ENCODE measurements at regions of chr12 and their contacts with region 1.

Region 1: DNA sequence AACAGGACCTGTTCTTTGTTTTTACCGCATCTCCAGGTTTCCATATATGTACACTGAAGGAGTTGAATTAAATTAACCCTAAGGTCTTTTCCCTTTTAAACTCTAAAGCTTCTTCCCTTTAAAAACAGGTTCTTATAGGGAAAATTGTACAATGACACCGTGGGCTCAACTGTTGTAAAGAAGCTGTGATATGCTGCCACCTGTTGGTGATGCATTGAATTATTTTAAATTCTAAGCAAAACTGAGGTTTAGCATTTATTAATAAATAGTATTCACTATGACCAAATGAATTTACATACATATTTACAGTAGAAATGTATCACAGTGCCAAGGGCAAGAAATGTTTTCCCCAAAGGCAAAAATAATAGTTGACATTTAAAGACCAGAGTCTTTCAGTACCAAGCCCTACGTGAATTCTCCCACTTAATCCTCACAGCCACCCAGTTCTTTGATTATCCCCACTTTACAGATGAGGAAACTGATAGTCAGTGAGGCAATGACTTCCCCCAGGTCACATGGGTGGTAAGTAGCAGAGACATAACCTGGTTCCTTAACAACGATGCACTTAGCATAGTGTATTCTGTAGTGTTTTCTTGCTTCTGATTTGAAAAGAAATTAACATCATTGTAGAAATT is 35.7 kb upstream of the TMEM263 start:
- DNase-seq: no peak
- ATAC-seq: peak; percentile 55
- H3K4me3 ChIP-seq: no peak overlapping the region
- H3K27ac ChIP-seq: no peak overlapping the region
- H3K4me1 ChIP-seq: peaks cover 6% of the 10 kb centered on the region
- H3K27me3 ChIP-seq: no peaks in the 10 kb centered on the region; a peak in 1 of 4 replicates
- CTCF ChIP-seq: peak; percentile 55 to 73 (median 64)
- EP300 ChIP-seq: no peak
- POLR2A ChIP-seq: no peak
- RAD21 ChIP-seq: peak; percentile 87

Region 2: DNA sequence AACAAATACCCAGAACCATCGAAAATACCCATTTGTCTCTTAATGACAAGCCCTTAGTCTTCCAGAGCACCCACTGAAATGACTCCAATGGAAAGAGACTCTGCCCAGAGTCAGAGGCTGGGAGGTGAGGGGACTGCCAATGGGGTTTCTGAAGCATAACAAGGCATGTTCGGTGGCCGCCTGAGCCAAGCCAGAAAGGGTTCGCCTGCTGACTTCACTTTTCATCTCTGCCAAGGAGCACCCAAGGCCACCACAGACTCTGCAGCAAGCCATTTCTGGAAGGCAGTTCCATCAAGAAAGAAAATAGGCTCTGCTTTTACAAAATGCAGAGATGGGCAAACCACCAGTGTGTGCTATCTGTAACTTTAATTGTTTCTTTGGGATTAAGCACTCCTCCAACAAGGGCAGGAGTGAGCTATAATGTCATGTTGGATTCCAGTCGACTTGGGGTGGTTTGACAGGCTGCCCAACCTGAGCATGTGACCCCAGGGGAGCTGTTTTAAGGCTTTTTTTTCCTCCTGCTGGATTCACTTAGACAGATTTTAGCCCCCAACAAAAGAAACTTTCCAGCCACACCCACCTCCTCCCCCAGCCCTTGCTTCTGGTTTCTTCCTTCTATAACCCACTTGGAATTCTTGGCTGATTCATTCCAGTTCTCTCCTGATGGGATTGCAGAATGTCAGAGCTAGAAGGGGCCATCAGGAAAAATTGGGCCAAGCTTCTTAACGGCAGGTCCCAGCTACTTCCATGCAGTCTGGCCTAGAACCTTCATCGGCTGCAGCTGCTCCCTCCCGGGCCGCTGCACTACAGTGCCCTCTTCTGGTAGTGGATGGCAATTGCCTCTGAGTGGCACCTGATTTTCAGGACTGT is 696.3 kb before region 1 on chr12:
- CTCF ChIA-PET with region 1: interaction called, 3 read pairs
- POLR2A ChIA-PET with region 1: no interaction called
- RAD21 ChIA-PET with region 1: interaction called, 7 read pairs
- SMC1A ChIA-PET with region 1: interaction called, 3 read pairs
- in situ Hi-C with region 1: no loop called
- intact Hi-C with region 1: loop called (anchors 10 kb)
- DNase-seq: no peak
- ATAC-seq: peak; percentile 94
- H3K4me3 ChIP-seq: no peak overlapping the region
- H3K27ac ChIP-seq: no peak overlapping the region
- H3K4me1 ChIP-seq: no peaks in the 10 kb centered on the region
- H3K27me3 ChIP-seq: no peaks in the 10 kb centered on the region
- CTCF ChIP-seq: peak; percentile 84 to 98 (median 95)
- EP300 ChIP-seq: no peak
- POLR2A ChIP-seq: no peak
- RAD21 ChIP-seq: peak; percentile 59

Region 3: GRCh38 chr12:106378788-106379187 is 541.2 kb before region 1 on chr12:
- CTCF ChIA-PET with region 1: interaction called, 23 read pairs
- POLR2A ChIA-PET with region 1: no interaction called
- RAD21 ChIA-PET with region 1: interaction called, 3 read pairs
- SMC1A ChIA-PET with region 1: interaction called, 3 read pairs
- in situ Hi-C with region 1: no loop called
- intact Hi-C with region 1: no loop called
- DNase-seq: no peak
- ATAC-seq: no peak
- H3K4me3 ChIP-seq: no peak overlapping the region
- H3K27ac ChIP-seq: no peak overlapping the region
- H3K4me1 ChIP-seq: no peaks in the 10 kb centered on the region
- H3K27me3 ChIP-seq: no peaks in the 10 kb centered on the region
- CTCF ChIP-seq: no peak
- EP300 ChIP-seq: no peak
- POLR2A ChIP-seq: no peak
- RAD21 ChIP-seq: no peak

Region 4: DNA sequence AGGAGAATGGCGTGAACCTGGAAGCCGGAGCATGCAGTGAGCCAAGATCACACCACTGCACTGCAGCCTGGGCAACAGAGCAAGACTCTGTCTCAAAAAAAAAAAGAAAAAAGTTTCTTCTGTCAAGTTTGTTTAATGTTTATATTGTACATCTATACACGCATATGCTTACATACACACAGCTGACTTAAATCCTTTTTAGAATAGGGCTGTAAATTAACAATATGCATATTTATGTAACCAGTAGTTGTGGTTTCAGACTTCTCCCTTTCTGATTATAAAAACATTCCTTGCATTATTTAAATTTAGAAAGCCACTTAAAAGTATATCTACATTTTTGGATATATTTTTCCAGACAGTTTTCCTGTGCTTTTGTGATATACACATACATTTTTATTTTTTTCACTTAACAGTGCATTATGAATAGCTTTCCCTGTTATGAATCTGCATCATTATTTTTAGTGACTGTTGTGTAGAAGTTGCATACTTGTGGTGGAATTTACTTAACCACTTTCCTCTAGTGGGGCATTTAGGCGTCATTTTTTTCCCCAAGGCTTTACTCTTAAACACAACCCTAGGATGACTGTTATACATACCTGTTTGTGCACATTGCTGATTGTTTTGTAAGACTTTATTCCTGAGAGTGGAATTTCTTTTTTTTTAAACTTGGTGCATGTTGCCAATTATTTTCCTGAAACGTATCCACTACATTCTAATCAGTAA is 533.1 kb before region 1 on chr12:
- CTCF ChIA-PET with region 1: interaction called, 69 read pairs
- POLR2A ChIA-PET with region 1: no interaction called
- RAD21 ChIA-PET with region 1: interaction called, 12 read pairs
- SMC1A ChIA-PET with region 1: interaction called, 26 read pairs
- in situ Hi-C with region 1: loop called (anchors 5 kb)
- intact Hi-C with region 1: loop called (anchors 1 kb)
- DNase-seq: no peak
- ATAC-seq: no peak
- H3K4me3 ChIP-seq: no peak overlapping the region
- H3K27ac ChIP-seq: no peak overlapping the region
- H3K4me1 ChIP-seq: no peaks in the 10 kb centered on the region
- H3K27me3 ChIP-seq: no peaks in the 10 kb centered on the region
- CTCF ChIP-seq: no peak
- EP300 ChIP-seq: no peak
- POLR2A ChIP-seq: no peak
- RAD21 ChIP-seq: no peak

Region 5: DNA sequence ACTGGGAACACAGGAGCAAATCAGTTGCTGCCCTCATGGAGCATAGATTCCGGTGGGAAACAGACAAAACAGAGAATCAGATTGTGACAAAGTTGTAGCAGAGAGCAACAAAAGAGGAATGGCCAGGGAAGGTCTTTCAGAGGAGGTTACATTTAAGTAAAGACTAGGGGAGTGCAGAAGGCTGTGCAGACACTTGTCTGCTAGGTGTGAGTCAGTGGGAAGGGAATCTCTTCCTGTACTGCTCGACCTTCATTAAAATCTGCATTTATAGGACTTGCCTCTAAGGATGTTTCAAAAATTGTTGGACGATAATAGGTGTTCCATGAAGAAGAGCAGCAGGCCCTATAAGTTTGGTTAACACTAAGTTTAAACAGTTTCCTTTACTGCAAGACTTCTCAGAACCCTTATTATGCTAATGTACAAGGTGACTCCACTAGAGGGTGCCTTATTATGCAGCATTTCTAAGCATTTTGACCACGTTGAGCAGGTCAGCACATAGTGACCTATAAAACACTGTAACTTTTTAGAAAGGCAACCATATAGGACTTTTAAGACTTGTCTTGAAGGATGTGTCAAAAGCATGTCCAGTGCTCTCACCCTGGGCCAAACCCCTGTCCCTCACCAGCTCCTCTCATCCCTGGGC is 237.3 kb before region 1 on chr12:
- CTCF ChIA-PET with region 1: interaction called, 8 read pairs
- POLR2A ChIA-PET with region 1: no interaction called
- RAD21 ChIA-PET with region 1: no interaction called
- SMC1A ChIA-PET with region 1: interaction called, 3 read pairs
- in situ Hi-C with region 1: no loop called
- intact Hi-C with region 1: loop called (anchors 5 kb)
- DNase-seq: no peak
- ATAC-seq: peak; percentile 78
- H3K4me3 ChIP-seq: no peak overlapping the region
- H3K27ac ChIP-seq: no peak overlapping the region
- H3K4me1 ChIP-seq: no peaks in the 10 kb centered on the region
- H3K27me3 ChIP-seq: no peaks in the 10 kb centered on the region
- CTCF ChIP-seq: peak; percentile 14 to 36 (median 24); a peak in 4 of 6 replicates
- EP300 ChIP-seq: no peak
- POLR2A ChIP-seq: no peak
- RAD21 ChIP-seq: peak; percentile 54

Region 6: GRCh38 chr12:106903241-106903945 is 16.6 kb before region 1 on chr12:
- CTCF ChIA-PET with region 1: interaction called, 102 read pairs
- POLR2A ChIA-PET with region 1: no interaction called
- RAD21 ChIA-PET with region 1: interaction called, 4 read pairs
- SMC1A ChIA-PET with region 1: interaction called, 9 read pairs
- in situ Hi-C with region 1: no loop called
- intact Hi-C with region 1: no loop called
- DNase-seq: no peak
- ATAC-seq: peak; percentile 85
- H3K4me3 ChIP-seq: 0 out of 2 replicates have a peak overlapping the region, but pooled peaks have one; percentile 5
- H3K27ac ChIP-seq: no peak overlapping the region
- H3K4me1 ChIP-seq: peaks cover 7% of the 10 kb centered on the region
- H3K27me3 ChIP-seq: no peaks in the 10 kb centered on the region; a peak in 1 of 4 replicates
- CTCF ChIP-seq: no peak
- EP300 ChIP-seq: no peak
- POLR2A ChIP-seq: no peak
- RAD21 ChIP-seq: no peak

Measured in GM12878 (cell line).